ENCODE measurements at regions of chr6 and their contacts with region 1.

Region 1: GRCh38 chr6:43506667-43507471 is 3.3 kb downstream of the LRRC73 start:
- DNase-seq: peak; percentile 65 to 88 (median 86)
- ATAC-seq: peak; percentile 37 to 46
- H3K4me3 ChIP-seq: no peak overlapping the region
- H3K27ac ChIP-seq: no peak overlapping the region
- H3K4me1 ChIP-seq: peaks cover 11% of the 10 kb centered on the region
- H3K27me3 ChIP-seq: no peaks in the 10 kb centered on the region

Region 2: GRCh38 chr6:43070028-43070632 is 436.7 kb before region 1 on chr6:
- intact Hi-C with region 1: no loop called
- DNase-seq: no peak
- ATAC-seq: no peak
- H3K4me3 ChIP-seq: no peak overlapping the region
- H3K27ac ChIP-seq: no peak overlapping the region
- H3K4me1 ChIP-seq: no peaks in the 10 kb centered on the region
- H3K27me3 ChIP-seq: no peaks in the 10 kb centered on the region

Region 3: DNA sequence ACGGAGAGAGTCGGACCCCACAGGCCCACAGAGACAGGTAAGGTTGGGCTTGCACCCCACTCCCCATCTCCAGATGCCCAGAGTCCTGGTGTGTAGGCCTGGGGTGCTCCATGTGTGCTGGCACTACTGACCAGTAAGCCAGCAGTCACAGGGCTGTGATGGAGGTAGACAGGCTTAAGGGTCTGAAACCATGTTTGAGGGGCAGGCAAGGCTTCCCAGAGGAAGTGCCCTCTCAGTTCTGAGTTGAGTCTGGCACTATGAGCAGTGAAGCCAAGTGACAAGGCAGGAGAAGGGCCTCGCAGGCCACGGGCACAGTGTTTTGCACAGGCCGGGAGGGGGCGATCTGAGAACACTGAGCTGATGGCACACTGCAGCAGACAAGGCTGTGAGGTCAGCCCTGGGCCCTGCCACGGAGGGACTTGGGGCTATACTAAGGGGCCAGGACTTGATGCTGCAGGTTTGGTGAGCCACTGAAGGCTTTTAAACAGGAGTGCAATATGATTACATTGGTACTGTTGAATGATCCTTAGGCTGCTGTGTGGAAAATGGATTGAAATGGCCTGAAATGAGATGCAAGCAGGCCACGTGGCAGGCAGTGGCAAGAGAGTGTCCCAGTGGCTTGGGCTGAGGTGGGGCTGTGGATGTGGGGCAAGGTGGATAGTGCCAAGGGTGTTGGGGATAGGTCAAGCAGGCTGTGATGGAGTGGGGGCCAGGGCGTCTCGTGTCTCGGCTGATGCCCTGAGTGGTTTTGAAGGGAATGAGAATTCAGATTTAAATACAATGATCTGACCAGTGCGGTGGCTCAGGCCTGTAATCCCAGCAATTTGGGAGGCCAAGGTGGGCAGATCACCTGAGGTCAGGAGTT is 243.3 kb before region 1 on chr6:
- intact Hi-C with region 1: loop called in 1 of 4 experiments (anchors 10 kb)
- DNase-seq: peak; percentile 73 to 90 (median 87)
- ATAC-seq: peak; percentile 79 to 82
- H3K4me3 ChIP-seq: no peak overlapping the region
- H3K27ac ChIP-seq: no peak overlapping the region
- H3K4me1 ChIP-seq: peaks cover 8% of the 10 kb centered on the region
- H3K27me3 ChIP-seq: no peaks in the 10 kb centered on the region

Region 4: DNA sequence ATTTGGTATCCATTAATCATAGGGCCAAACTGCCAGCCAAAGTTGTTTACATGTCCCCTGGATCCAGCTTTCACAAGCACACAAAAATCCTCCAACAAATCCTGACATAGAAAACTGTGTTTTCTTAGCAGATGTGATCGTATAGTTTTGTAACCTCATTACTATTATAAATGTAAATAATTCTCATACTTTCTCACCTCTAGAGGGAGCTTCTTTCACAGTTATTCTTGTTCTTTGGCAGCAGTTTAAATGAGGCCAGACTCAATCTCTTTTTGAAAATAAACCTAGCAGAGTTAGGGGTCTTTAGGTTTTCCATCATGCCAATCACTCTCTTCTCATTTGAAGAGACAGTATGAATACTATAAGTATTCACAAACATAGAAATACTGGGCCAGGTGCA is 120.4 kb before region 1 on chr6:
- intact Hi-C with region 1: loop called (anchors 5 to 10 kb)
- DNase-seq: no peak
- ATAC-seq: no peak
- H3K4me3 ChIP-seq: no peak overlapping the region
- H3K27ac ChIP-seq: no peak overlapping the region
- H3K4me1 ChIP-seq: no peaks in the 10 kb centered on the region
- H3K27me3 ChIP-seq: no peaks in the 10 kb centered on the region

Region 5: GRCh38 chr6:43391440-43392031 is 115.3 kb before region 1 on chr6:
- intact Hi-C with region 1: loop called in 3 of 4 experiments (anchors 5 to 10 kb)
- DNase-seq: no peak
- ATAC-seq: no peak
- H3K4me3 ChIP-seq: no peak overlapping the region
- H3K27ac ChIP-seq: no peak overlapping the region
- H3K4me1 ChIP-seq: no peaks in the 10 kb centered on the region
- H3K27me3 ChIP-seq: no peaks in the 10 kb centered on the region

Region 6: DNA sequence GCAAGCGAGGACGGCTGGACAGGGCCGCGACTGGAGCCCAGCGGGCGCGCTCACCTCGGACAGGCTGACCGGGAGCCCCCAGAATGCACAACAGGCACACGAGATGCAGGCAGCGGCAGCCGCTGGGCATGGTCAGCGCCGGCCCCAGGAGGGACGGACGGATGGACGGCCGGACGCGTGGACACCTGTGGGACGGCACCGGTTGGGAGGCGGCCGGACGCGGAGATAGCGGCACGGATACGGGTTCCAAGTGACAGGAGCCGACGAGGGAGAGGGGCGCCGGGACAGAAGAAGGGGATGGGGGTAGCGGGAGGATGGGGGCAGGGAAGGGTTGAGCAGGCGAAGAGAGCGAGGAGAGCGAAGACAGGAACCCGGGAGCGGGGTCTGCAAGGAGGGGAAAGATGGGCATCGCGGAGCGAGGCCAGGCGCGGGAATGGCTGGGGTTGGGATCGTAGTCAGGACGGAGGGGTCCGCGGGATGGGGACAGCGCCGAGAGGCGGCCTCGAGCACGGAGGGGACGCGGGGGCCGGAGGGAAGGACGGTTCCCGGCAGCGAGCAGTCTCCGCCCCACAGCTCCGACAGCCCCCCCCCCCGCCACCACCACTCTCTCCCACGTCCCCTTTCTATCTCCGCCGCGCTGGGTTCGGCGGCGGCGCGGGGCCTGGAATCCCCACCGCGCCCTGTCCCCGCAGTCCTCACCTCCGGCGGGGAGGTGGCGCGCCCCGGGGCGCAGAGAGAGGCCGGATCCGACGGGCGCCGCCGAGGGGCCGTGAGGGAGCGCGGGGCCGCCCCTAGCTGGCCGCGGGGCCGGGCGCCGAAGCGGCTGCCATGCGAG is 52.0 kb before region 1 on chr6:
- intact Hi-C with region 1: loop called (anchors 2 to 5 kb)
- DNase-seq: peak; percentile 88 to 95 (median 95)
- ATAC-seq: peak; percentile 87 to 91
- H3K4me3 ChIP-seq: peak overlapping the region; percentile 36
- H3K27ac ChIP-seq: no peak overlapping the region
- H3K4me1 ChIP-seq: no peaks in the 10 kb centered on the region
- H3K27me3 ChIP-seq: no peaks in the 10 kb centered on the region

Region 7: GRCh38 chr6:44086931-44087574 is 580.2 kb after region 1 on chr6:
- intact Hi-C with region 1: no loop called
- DNase-seq: peak; percentile 47 to 85 (median 78)
- ATAC-seq: peak; percentile 10 to 46
- H3K4me3 ChIP-seq: no peak overlapping the region
- H3K27ac ChIP-seq: no peak overlapping the region
- H3K4me1 ChIP-seq: peaks cover 4% of the 10 kb centered on the region
- H3K27me3 ChIP-seq: no peaks in the 10 kb centered on the region